ENCODE measurements at regions of chr12 and their contacts with region 1.

Region 1: DNA sequence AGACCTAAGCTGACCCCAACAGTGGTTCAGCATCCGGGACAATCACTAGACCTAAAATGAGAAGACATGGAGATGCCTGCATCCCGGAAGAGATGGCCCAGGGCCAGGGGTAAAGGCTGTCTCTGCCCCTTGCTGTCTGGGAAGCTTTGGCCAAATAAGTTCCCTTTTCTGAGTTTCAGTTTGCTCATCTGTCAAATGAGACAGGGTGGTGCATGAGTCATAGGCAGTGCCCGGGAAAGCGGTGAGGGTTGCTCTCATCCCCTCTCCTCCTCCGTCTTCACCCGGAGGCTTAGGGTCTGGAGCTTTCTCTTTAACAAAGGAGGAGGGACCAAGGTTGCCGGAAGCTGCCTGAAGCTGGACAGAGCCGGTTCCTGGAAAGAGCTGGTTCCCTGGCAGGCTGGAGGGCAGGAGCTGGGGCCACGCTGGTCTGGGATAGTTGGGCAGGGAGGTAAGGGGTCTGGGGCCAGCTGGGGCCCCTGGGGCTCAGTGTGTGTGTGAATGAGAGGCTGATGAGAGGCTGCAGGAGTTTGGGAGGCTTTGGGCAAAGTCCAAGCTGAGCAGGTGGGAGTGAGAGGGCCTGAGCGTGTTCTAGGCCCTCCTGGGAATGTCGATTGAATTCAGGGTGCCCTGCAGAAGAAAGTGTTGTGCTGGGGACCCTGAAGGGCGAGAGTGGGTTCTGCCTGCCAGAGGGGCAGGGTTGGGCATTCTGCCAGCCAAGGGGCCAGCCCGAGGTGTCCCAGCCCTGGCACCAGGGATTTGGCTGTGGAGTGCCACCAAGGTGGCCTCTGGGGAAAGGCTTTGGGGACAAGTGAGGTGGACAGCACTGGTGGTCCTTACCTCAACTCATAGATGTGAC is at the start of gene SDSL:
- H3K4me3 Mint-ChIP-seq: peak within 1 kb of the TSS; percentile 97
- H3K27ac Mint-ChIP-seq: peak within 1 kb of the TSS; percentile 97
- H3K4me1 Mint-ChIP-seq: peaks cover 73% of the 10 kb centered on the region
- H3K27me3 Mint-ChIP-seq: peaks cover 1% of the 10 kb centered on the region

Region 2: GRCh38 chr12:113310489-113310888 is 111.8 kb before region 1 on chr12:
- intact Hi-C with region 1: loop called (anchors 1 kb)
- H3K4me3 Mint-ChIP-seq: no peak overlapping the region
- H3K27ac Mint-ChIP-seq: no peak overlapping the region
- H3K4me1 Mint-ChIP-seq: no peaks in the 10 kb centered on the region
- H3K27me3 Mint-ChIP-seq: no peaks in the 10 kb centered on the region

Region 3: DNA sequence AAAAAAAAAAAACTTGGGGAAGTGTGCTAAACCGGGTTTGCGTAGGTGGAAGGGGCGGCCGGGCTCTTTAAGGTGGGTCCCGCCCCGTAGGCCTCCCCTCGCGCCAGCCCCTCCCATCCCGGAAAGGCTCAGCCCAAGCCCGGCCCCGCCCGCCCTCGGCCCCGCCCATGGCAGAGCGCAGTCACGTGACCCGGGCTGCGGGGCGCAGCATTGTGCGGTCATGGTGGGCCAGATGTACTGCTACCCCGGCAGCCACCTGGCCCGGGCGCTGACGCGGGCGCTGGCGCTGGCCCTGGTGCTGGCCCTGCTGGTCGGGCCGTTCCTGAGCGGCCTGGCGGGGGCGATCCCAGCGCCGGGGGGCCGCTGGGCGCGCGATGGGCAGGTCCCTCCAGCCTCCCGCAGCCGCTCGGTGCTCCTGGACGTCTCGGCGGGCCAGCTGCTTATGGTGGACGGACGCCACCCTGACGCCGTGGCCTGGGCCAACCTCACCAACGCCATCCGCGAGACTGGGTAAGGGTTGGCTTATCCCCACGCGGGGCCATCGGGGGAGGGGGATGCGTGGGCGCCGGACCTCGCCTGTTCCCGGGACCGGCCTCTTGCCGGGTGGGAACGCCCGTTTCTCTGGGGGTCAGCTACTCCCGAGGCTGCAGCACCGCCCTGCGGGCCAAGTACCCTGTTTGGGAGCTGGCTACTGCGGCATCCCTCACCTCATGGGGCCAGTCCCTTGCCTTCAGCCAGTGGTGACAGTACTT is 63.7 kb before region 1 on chr12 and contains the start of gene PLBD2:
- intact Hi-C with region 1: loop called (anchors 2 kb)
- H3K4me3 Mint-ChIP-seq: peak within 1 kb of the TSS; percentile 90
- H3K27ac Mint-ChIP-seq: peak within 1 kb of the TSS; percentile 84
- H3K4me1 Mint-ChIP-seq: peaks cover 33% of the 10 kb centered on the region
- H3K27me3 Mint-ChIP-seq: no peaks in the 10 kb centered on the region